Activated CD4-positive, alpha-beta T cell treated with anti-CD3 and anti-CD28 coated beads, Interleukin-2, amount 10 ng/mL, durations not matched to agents 24 days and 14 days (primary cell): ENCODE measurements at regions of chr1 and their contacts with region 1.

Region 1: GRCh38 chr1:158901623-158902022 is 29.7 kb upstream of the PYHIN1 start:
- DNase-seq: no peak
- H3K4me3 Mint-ChIP-seq: no peak overlapping the region
- H3K27ac Mint-ChIP-seq: no peak overlapping the region
- H3K4me1 Mint-ChIP-seq: no peaks in the 10 kb centered on the region
- H3K27me3 Mint-ChIP-seq: peaks cover 26% of the 10 kb centered on the region

Region 2: DNA sequence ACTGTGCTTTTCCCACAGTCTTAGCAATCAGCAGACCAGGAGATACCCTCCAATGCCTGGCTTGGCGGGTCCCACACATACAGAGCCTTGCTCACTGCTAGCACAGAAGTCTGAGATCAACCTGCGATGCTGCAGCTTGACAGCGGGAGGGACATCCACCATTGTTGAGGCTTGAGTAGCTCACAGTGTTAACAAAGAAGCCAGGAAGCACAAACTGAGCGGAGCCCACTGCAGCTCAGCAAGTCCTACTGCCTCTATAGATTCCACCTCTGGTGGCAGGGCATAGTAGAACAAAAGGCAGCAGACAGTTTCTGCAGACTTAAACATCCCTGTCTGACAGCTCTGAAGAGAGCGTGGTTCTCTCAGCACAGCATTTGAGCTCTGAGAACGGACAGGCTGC is 37.0 kb before region 1 on chr1:
- intact Hi-C with region 1: loop called (anchors 10 kb)
- DNase-seq: no peak
- H3K4me3 Mint-ChIP-seq: no peak overlapping the region
- H3K27ac Mint-ChIP-seq: no peak overlapping the region
- H3K4me1 Mint-ChIP-seq: no peaks in the 10 kb centered on the region
- H3K27me3 Mint-ChIP-seq: peaks cover 13% of the 10 kb centered on the region

Region 3: DNA sequence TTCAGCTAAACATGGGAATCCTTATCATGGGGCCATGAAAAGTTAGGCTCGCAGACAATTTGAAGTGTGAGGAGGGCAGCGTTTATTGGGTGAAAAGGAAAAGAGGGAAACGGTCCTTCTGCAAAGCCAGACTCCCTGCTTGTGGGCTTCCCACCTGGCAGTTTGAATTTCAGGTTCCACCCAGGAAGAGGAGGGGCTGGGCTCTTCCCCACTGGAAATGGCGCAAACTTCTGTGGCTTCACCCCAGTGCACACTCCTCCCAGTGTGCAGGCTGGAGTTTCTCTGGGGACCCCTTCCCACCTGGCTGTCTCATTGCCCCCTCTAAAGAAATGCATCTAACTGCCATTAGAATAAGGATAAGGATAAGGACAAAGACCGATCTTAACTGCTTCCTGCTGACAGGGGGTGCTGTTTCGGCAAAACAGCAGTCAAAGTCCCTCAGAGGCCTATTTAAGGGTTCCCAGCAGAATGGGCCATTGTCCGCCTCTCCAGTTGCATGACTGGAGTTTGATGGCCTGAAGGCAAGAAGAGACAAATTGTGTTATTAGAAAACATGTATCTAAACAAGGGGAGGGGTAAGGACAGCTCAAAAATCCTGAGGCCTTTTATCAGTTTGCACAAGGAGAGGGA is 154.6 kb after region 1 on chr1:
- intact Hi-C with region 1: no loop called
- DNase-seq: no peak
- H3K4me3 Mint-ChIP-seq: no peak overlapping the region
- H3K27ac Mint-ChIP-seq: peak overlapping the region; percentile 66
- H3K4me1 Mint-ChIP-seq: peaks cover 35% of the 10 kb centered on the region
- H3K27me3 Mint-ChIP-seq: no peaks in the 10 kb centered on the region